ENCODE measurements at regions of chr14 and their contacts with region 1.

Region 1: DNA sequence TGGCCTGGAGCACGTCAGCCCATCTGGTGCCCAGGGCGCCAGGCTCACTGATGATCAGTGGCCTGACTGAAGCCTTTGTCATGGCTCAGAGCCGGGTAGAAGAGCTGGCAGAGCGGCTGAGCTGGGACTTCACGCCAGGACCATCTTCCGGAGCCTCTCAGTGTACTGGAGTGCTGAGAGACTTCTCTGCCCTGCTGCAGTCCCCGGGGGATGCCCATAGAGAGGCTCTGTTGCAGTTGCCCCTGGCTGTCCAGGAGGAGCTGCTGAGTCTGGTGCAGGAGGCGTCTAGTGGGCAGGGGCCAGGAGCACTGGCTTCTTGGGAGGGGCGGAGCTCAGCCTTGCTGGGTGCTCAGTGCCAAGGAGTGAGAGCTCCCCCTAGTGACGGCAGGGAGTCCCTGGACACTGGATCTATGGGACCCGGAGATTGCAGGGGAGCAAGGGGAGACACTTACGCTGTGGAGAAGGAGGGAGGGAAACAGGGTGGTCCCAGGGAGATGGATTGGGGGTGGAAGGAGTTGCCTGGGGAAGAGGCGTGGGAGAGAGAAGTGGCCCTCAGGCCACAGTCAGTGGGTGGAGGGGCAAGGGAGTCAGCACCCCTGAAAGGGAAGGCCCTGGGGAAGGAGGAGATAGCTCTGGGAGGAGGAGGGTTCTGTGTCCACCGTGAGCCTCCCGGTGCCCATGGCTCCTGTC is 2.0 kb downstream of the KHNYN start:
- DNase-seq: peak; percentile 94
- H3K4me3 ChIP-seq: peak overlapping the region; percentile 75
- H3K27ac ChIP-seq: peak overlapping the region; percentile 87
- H3K4me1 ChIP-seq: peaks cover 18% of the 10 kb centered on the region
- H3K27me3 ChIP-seq: no peaks in the 10 kb centered on the region
- CTCF ChIP-seq: peak; percentile 99

Region 2: GRCh38 chr14:24141097-24141880 is 290.4 kb before region 1 on chr14 and contains the start of gene EMC9:
- CTCF ChIA-PET with region 1: no interaction called
- POLR2A ChIA-PET with region 1: no interaction called
- intact Hi-C with region 1: no loop called
- DNase-seq: peak; percentile 100
- H3K4me3 ChIP-seq: peak within 1 kb of the TSS; percentile 74
- H3K27ac ChIP-seq: peak within 1 kb of the TSS; percentile 80
- H3K4me1 ChIP-seq: peaks cover 20% of the 10 kb centered on the region
- H3K27me3 ChIP-seq: no peaks in the 10 kb centered on the region
- CTCF ChIP-seq: peak; percentile 42; the same call in 1 of the 2 replicates
- total RNA-seq, gene EMC9: 36.8 and 50.4 TPM in 2 replicates

Region 3: GRCh38 chr14:24219080-24219479 is 212.6 kb before region 1 on chr14:
- CTCF ChIA-PET with region 1: interaction called, 28 read pairs
- POLR2A ChIA-PET with region 1: no interaction called
- intact Hi-C with region 1: no loop called
- DNase-seq: no peak
- H3K4me3 ChIP-seq: no peak overlapping the region
- H3K27ac ChIP-seq: no peak overlapping the region
- H3K4me1 ChIP-seq: peaks cover 3% of the 10 kb centered on the region
- H3K27me3 ChIP-seq: no peaks in the 10 kb centered on the region
- CTCF ChIP-seq: no peak

Region 4: GRCh38 chr14:24241829-24242443 is 189.8 kb before region 1 on chr14:
- CTCF ChIA-PET with region 1: interaction called, 14 read pairs
- POLR2A ChIA-PET with region 1: interaction called, 3 read pairs
- intact Hi-C with region 1: loop called (anchors 2 kb)
- DNase-seq: peak; percentile 96
- H3K4me3 ChIP-seq: peak overlapping the region; percentile 57
- H3K27ac ChIP-seq: peak overlapping the region; percentile 95
- H3K4me1 ChIP-seq: peaks cover 10% of the 10 kb centered on the region
- H3K27me3 ChIP-seq: no peaks in the 10 kb centered on the region
- CTCF ChIP-seq: peak; percentile 47

Region 5: GRCh38 chr14:24332268-24332993 is 99.3 kb before region 1 on chr14:
- CTCF ChIA-PET with region 1: interaction called, 101 read pairs
- POLR2A ChIA-PET with region 1: interaction called, 4 read pairs
- intact Hi-C with region 1: loop called (anchors 1 kb)
- DNase-seq: peak; percentile 88
- H3K4me3 ChIP-seq: no peak overlapping the region
- H3K27ac ChIP-seq: no peak overlapping the region
- H3K4me1 ChIP-seq: peaks cover 10% of the 10 kb centered on the region
- H3K27me3 ChIP-seq: no peaks in the 10 kb centered on the region
- CTCF ChIP-seq: peak; percentile 79

Region 6: GRCh38 chr14:24442273-24443052 is 10.7 kb after region 1 on chr14 and contains the start of gene SDR39U1:
- CTCF ChIA-PET with region 1: interaction called, 13 read pairs
- POLR2A ChIA-PET with region 1: interaction called, 6 read pairs
- intact Hi-C with region 1: no loop called
- DNase-seq: peak; percentile 99
- H3K4me3 ChIP-seq: peak within 1 kb of the TSS; percentile 76
- H3K27ac ChIP-seq: peak within 1 kb of the TSS; percentile 97
- H3K4me1 ChIP-seq: peaks cover 11% of the 10 kb centered on the region
- H3K27me3 ChIP-seq: no peaks in the 10 kb centered on the region
- CTCF ChIP-seq: 0 out of 2 replicates have a peak, but pooled peaks have one; percentile 9
- total RNA-seq, gene SDR39U1: 49.1 and 52.1 TPM in 2 replicates

Region 7: DNA sequence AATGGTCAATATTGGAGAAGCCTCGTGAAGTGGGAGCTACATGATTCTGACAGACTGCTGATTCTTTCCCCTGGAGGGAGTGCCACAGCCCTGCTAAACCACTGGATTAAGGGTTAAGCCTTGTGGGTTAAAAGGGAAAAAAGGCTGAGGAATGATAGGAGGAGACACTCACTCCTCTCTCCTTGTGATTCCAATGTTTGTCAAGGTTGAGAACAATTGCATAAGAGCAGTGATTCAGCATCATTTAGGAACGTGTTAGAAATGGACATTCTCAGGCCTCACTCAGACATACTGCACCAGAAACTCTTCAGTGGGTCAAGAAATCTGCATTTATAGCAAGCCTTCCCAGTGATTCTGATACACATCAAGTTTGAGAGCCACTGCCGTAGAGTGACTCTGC is 290.1 kb after region 1 on chr14:
- CTCF ChIA-PET with region 1: no interaction called
- POLR2A ChIA-PET with region 1: no interaction called
- intact Hi-C with region 1: no loop called
- DNase-seq: no peak
- H3K4me3 ChIP-seq: no peak overlapping the region
- H3K27ac ChIP-seq: no peak overlapping the region
- H3K4me1 ChIP-seq: peaks cover 12% of the 10 kb centered on the region
- H3K27me3 ChIP-seq: peaks cover 11% of the 10 kb centered on the region
- CTCF ChIP-seq: no peak

Measured in A673 (cell line).